ENCODE measurements at regions of chr1 and their contacts with region 1.

Region 1: GRCh38 chr1:114581335-114582287 is at the start of gene BCAS2:
- DNase-seq: peak; percentile 95 to 97
- ATAC-seq: peak; percentile 99
- H3K4me3 ChIP-seq: peak within 1 kb of the TSS; percentile 64 to 75 (median 70)
- H3K27ac ChIP-seq: peak within 1 kb of the TSS; percentile 87 to 95 (median 92)
- H3K4me1 ChIP-seq: peaks cover 16 to 25% of the 10 kb centered on the region in 2 donors
- H3K27me3 ChIP-seq: no peaks in the 10 kb centered on the region
- CTCF ChIP-seq: no peak
- POLR2A ChIP-seq: peak; percentile 88 to 89
- total RNA-seq, gene BCAS2: 23.7 to 32.8 (median 25.2) TPM

Region 2: DNA sequence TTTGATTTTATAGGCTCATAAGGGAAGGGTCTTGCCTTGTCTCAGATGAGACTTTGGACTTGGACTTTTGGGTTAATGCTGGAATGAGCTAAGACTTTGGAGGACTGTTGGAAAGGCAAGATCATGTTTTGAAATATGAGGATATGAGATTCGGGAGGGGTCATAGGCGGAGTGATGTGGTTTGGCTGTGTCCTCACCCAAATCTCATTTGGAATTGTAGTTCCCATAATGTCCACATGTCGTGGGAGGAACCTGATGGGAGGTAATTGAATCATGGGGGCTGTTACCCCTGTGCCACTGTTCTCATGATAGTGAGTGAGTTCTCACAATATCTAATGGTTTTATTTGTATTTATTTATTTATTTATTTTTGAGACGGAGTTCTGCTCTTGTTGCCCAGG is 183.1 kb after region 1 on chr1:
- in situ Hi-C with region 1: loop called (anchors 10 to 25 kb)
- intact Hi-C with region 1: no loop called
- DNase-seq: no peak
- ATAC-seq: no peak
- H3K4me3 ChIP-seq: no peak overlapping the region
- H3K27ac ChIP-seq: no peak overlapping the region
- H3K4me1 ChIP-seq: no peaks in the 10 kb centered on the region
- H3K27me3 ChIP-seq: no peaks in the 10 kb centered on the region
- CTCF ChIP-seq: no peak
- POLR2A ChIP-seq: no peak